Sigmoid colon (tissue), 7 donors: ENCODE measurements at regions of chr2 and their contacts with region 1.

Region 1: GRCh38 chr2:204260162-204260877 is 285.0 kb upstream of the PARD3B start:
- DNase-seq: peak; percentile 84
- H3K4me3 ChIP-seq: no peak overlapping the region
- H3K27ac ChIP-seq: no peak overlapping the region
- H3K4me1 ChIP-seq: peaks cover 0 to 20% (median 12%) of the 10 kb centered on the region in 4 donors
- H3K27me3 ChIP-seq: no peaks in the 10 kb centered on the region
- CTCF ChIP-seq: peak; percentile 54 to 89 (median 83)
- EP300 ChIP-seq: no peak
- POLR2A ChIP-seq: no peak

Region 2: DNA sequence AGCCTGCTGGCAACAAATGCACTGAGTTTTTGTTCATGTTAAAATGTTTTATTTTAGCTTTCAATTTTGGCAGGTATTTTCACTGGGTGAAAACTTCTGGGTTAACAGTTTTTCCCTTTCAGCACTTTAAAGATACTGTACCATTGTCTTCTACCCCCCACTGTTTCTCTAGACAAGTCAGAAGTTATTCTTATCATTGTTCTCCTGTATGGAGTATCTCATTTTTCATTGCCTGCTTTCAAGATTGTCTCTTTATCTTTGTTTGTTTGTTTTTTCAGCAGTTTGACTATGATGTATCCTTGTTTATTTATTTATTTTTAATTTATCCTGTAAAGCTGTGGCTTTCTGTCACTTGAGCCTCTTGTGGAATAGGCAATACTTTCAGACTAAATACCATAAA is 46.7 kb before region 1 on chr2:
- intact Hi-C with region 1: no loop called
- DNase-seq: no peak
- H3K4me3 ChIP-seq: no peak overlapping the region
- H3K27ac ChIP-seq: no peak overlapping the region
- H3K4me1 ChIP-seq: no peaks in the 10 kb centered on the region
- H3K27me3 ChIP-seq: no peaks in the 10 kb centered on the region
- CTCF ChIP-seq: no peak
- EP300 ChIP-seq: no peak
- POLR2A ChIP-seq: no peak

Region 3: DNA sequence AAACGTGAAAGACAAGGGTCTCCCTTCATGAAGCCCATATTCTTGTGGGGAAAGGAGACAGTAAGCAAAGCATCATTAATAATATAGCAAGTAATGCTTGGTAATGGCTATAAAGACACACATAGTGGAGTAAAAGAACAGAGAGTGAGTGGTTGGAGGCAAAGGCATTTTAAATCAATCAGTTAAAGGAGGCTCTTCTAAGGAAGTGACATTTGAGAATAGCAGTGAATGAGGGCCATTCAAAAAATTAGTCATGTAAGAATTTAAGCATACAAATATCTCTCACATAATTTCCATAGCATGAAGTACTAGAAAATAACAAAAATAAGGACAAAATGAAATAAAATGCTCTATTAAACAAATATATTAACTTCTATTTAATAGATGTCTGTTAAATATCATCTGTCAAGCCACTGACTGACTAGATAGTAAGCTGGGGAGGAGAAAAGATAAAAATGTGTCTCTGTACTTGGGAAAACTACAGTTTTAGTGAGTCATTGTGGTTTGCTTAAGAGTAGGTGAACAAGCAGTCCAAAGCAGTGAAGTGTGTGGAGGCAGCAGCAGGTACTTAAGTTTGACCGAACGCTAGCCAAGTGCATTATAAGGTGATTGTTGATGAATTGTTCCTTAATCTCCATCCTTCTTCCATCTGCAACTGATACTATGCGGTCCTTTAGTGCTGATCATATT is 445.1 kb after region 1 on chr2:
- intact Hi-C with region 1: loop called (anchors 5 kb)
- DNase-seq: no peak
- H3K4me3 ChIP-seq: no peak overlapping the region
- H3K27ac ChIP-seq: no peak overlapping the region
- H3K4me1 ChIP-seq: peaks cover 0 to 39% (median 23%) of the 10 kb centered on the region in 4 donors
- H3K27me3 ChIP-seq: no peaks in the 10 kb centered on the region
- CTCF ChIP-seq: no peak
- EP300 ChIP-seq: no peak
- POLR2A ChIP-seq: no peak